Activated CD4-positive, alpha-beta T cell treated with anti-CD3 and anti-CD28 coated beads, Interleukin-2, amount 10 ng/mL, durations not matched to agents 24 days and 14 days (primary cell): ENCODE measurements at regions of chr3 and their contacts with region 1.

Region 1: GRCh38 chr3:192917404-192918274 is at the start of gene MB21D2:
- DNase-seq: peak; percentile 91
- H3K4me3 Mint-ChIP-seq: peak within 1 kb of the TSS; percentile 96
- H3K27ac Mint-ChIP-seq: peak within 1 kb of the TSS; percentile 92
- H3K4me1 Mint-ChIP-seq: peaks cover 46% of the 10 kb centered on the region
- H3K27me3 Mint-ChIP-seq: peaks cover 49% of the 10 kb centered on the region
- total RNA-seq, gene MB21D2: 8.6 and 9.4 TPM in 2 replicates

Region 2: GRCh38 chr3:192851821-192852424 is 65.7 kb before region 1 on chr3:
- intact Hi-C with region 1: loop called (anchors 1 kb)
- DNase-seq: no peak
- H3K4me3 Mint-ChIP-seq: no peak overlapping the region
- H3K27ac Mint-ChIP-seq: peak overlapping the region; percentile 27
- H3K4me1 Mint-ChIP-seq: peaks cover 45% of the 10 kb centered on the region
- H3K27me3 Mint-ChIP-seq: no peaks in the 10 kb centered on the region

Region 3: DNA sequence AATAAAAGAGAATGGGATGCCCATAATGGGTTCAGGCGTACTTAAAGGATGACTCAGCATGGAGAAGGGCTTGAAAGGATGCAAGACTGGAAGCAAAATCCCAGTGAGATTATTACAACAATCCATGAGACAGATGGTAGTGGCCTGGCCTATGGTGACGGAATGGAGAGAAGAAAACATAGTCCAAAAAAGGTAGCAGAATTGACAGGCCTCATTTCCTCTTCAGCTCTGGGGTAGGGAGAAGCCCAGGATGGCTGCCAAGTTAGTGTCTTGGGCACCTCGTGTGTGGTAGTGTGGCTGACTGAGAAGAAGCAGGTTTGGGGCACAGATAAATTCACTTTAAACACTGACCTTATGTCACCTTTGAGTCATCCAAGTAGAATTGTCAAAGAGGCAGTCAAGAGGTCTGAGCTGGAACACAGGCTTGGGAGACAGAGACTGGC is 18.1 kb before region 1 on chr3:
- intact Hi-C with region 1: loop called (anchors 1 kb)
- DNase-seq: no peak
- H3K4me3 Mint-ChIP-seq: peak overlapping the region; percentile 65
- H3K27ac Mint-ChIP-seq: peak overlapping the region; percentile 85
- H3K4me1 Mint-ChIP-seq: peaks cover 62% of the 10 kb centered on the region
- H3K27me3 Mint-ChIP-seq: peaks cover 20% of the 10 kb centered on the region

Region 4: GRCh38 chr3:192957441-192958021 is 39.9 kb after region 1 on chr3:
- intact Hi-C with region 1: loop called (anchors 1 kb)
- DNase-seq: peak; percentile 67
- H3K4me3 Mint-ChIP-seq: peak overlapping the region; percentile 24
- H3K27ac Mint-ChIP-seq: peak overlapping the region; percentile 78
- H3K4me1 Mint-ChIP-seq: peaks cover 24% of the 10 kb centered on the region
- H3K27me3 Mint-ChIP-seq: no peaks in the 10 kb centered on the region

Region 5: GRCh38 chr3:192993411-192993810 is 75.8 kb after region 1 on chr3:
- intact Hi-C with region 1: no loop called
- DNase-seq: no peak
- H3K4me3 Mint-ChIP-seq: no peak overlapping the region
- H3K27ac Mint-ChIP-seq: no peak overlapping the region
- H3K4me1 Mint-ChIP-seq: peaks cover 8% of the 10 kb centered on the region
- H3K27me3 Mint-ChIP-seq: peaks cover 16% of the 10 kb centered on the region

Region 6: GRCh38 chr3:193124861-193125260 is 207.2 kb after region 1 on chr3:
- intact Hi-C with region 1: no loop called
- DNase-seq: no peak
- H3K4me3 Mint-ChIP-seq: no peak overlapping the region
- H3K27ac Mint-ChIP-seq: no peak overlapping the region
- H3K4me1 Mint-ChIP-seq: no peaks in the 10 kb centered on the region
- H3K27me3 Mint-ChIP-seq: peaks cover 5% of the 10 kb centered on the region